ENCODE measurements at regions of chr9 and their contacts with region 1.

Region 1: GRCh38 chr9:33816327-33817252 is at the start of gene UBE2R2:
- DNase-seq: peak; percentile 99
- H3K4me3 ChIP-seq: peak within 1 kb of the TSS; percentile 69 to 78
- H3K27ac ChIP-seq: peak within 1 kb of the TSS; percentile 92 to 95
- H3K4me1 ChIP-seq: peaks cover 7 to 21% of the 10 kb centered on the region in 2 experiments; a peak in 3 of 4 replicates
- H3K27me3 ChIP-seq: no peaks in the 10 kb centered on the region
- CTCF ChIP-seq: no peak
- EP300 ChIP-seq: peak; percentile 17 to 29; a peak in 2 of 4 replicates
- RAD21 ChIP-seq: no peak
- polyA plus RNA-seq, gene UBE2R2: 16.4 and 19.7 TPM in 2 replicates

Region 2: DNA sequence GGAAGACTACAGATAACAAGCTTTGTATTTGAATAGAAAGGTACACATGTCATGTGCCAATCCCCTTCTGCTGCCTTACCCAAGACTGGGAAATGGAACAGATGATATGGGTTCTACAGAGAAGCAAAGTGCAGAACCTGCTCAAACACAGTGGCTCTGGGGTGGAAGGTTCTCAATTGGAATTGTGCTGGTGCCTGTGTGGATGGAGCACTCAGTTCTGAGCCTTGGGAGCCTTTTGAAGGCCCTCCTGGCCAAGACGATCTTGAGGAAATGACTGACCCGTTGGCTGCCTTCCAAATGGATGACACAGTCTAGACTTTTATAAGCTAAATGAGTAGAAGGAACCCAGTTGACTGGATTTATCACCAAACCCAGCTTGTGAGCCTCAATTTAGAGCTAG is 25.5 kb before region 1 on chr9:
- CTCF ChIA-PET with region 1: interaction called, 23 read pairs
- POLR2A ChIA-PET with region 1: no interaction called
- DNase-seq: no peak
- H3K4me3 ChIP-seq: no peak overlapping the region
- H3K27ac ChIP-seq: no peak overlapping the region
- H3K4me1 ChIP-seq: no peaks in the 10 kb centered on the region; a peak in 2 of 4 replicates
- H3K27me3 ChIP-seq: no peaks in the 10 kb centered on the region
- CTCF ChIP-seq: no peak
- EP300 ChIP-seq: no peak
- RAD21 ChIP-seq: no peak

Region 3: DNA sequence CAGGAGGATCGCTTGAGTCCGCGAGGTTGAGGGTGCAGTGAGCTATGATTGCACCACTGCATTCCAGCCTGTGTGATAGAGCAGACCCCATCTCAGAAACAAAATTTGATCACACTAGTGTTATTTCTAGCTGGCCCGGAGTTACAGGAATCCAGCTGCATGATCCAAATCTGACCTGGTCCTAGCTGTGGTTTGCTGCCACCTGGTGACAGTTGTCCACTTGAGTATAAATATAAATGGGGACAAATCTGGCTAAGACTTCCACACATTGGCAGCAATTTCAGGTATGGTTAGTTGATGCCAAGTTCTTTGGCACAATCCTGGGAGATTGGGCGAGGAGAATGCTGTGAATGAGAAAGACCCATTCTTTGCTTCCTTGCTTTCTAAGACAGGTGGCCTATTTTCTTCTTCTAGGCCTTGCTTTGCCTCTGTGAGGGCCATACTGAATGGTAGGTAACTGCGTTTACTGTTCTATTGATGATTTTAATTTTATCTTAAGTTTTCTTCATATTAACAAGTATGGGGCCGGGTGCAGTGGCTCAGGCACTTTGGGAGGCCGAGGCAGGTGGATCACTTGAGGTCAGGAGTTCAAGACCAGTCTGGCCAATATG is 35.7 kb after region 1 on chr9:
- CTCF ChIA-PET with region 1: interaction called, 57 read pairs
- POLR2A ChIA-PET with region 1: no interaction called
- DNase-seq: peak; percentile 63
- H3K4me3 ChIP-seq: no peak overlapping the region
- H3K27ac ChIP-seq: no peak overlapping the region
- H3K4me1 ChIP-seq: peaks cover 4 to 7% of the 10 kb centered on the region in 2 experiments; a peak in 2 of 4 replicates
- H3K27me3 ChIP-seq: no peaks in the 10 kb centered on the region
- CTCF ChIP-seq: peak; percentile 59
- EP300 ChIP-seq: no peak
- RAD21 ChIP-seq: peak; percentile 83

Region 4: GRCh38 chr9:33964086-33964768 is 147.6 kb after region 1 on chr9:
- CTCF ChIA-PET with region 1: no interaction called
- POLR2A ChIA-PET with region 1: no interaction called
- DNase-seq: no peak
- H3K4me3 ChIP-seq: no peak overlapping the region
- H3K27ac ChIP-seq: peak overlapping the region in 1 of 2 experiments; percentile 36; a peak in 2 of 4 replicates
- H3K4me1 ChIP-seq: peaks cover 0 to 3% of the 10 kb centered on the region in 2 experiments; a peak in 2 of 4 replicates
- H3K27me3 ChIP-seq: no peaks in the 10 kb centered on the region
- CTCF ChIP-seq: no peak
- EP300 ChIP-seq: no peak
- RAD21 ChIP-seq: no peak

Region 5: GRCh38 chr9:34252670-34253459 is 436.3 kb after region 1 on chr9:
- CTCF ChIA-PET with region 1: no interaction called
- POLR2A ChIA-PET with region 1: no interaction called
- DNase-seq: peak; percentile 72
- H3K4me3 ChIP-seq: peak overlapping the region in 1 of 2 experiments; percentile 16; a peak in 1 of 4 replicates
- H3K27ac ChIP-seq: peak overlapping the region; percentile 34 to 69; a peak in 3 of 4 replicates
- H3K4me1 ChIP-seq: peaks cover 17 to 25% of the 10 kb centered on the region in 2 experiments; a peak in 3 of 4 replicates
- H3K27me3 ChIP-seq: no peaks in the 10 kb centered on the region
- CTCF ChIP-seq: peak; percentile 89
- EP300 ChIP-seq: no peak
- RAD21 ChIP-seq: peak; percentile 57

Region 6: DNA sequence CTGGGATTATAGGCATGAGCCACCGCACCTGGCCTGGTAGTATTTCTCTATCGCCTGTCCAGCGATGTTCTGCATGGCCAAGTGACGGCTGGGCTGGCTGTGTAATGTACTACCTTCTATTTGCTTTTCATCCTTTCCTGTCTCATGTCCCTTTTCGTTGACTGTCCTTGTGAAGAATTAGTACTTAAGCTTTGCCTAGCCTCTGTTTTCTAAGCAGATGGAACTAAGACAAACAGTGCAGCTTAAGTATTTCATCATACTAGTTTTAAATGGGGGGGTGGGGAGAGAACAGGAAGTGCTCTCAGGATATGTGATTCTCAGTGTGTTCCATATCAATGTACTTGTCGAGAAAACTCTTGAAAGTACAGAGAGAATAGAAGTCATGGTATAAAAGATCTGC is 925.0 kb after region 1 on chr9:
- CTCF ChIA-PET with region 1: no interaction called
- POLR2A ChIA-PET with region 1: no interaction called
- DNase-seq: no peak
- H3K4me3 ChIP-seq: no peak overlapping the region
- H3K27ac ChIP-seq: no peak overlapping the region
- H3K4me1 ChIP-seq: peaks cover 0 to 3% of the 10 kb centered on the region in 2 experiments; a peak in 1 of 4 replicates
- H3K27me3 ChIP-seq: no peaks in the 10 kb centered on the region
- CTCF ChIP-seq: no peak
- EP300 ChIP-seq: no peak
- RAD21 ChIP-seq: no peak

Measured in SK-N-SH (cell line).